Right lobe of liver (tissue), 6 donors: ENCODE measurements at regions of chr4 and their contacts with region 1.

Region 1: GRCh38 chr4:1249148-1249730 is 309 bp upstream of the CTBP1 start:
- DNase-seq: peak; percentile 90 to 93 (median 93)
- ATAC-seq: peak; percentile 70 to 78 (median 74)
- H3K4me3 ChIP-seq: peak overlapping the region; percentile 67 to 96 (median 69)
- H3K27ac ChIP-seq: peak overlapping the region; percentile 76 to 93 (median 87)
- H3K4me1 ChIP-seq: peaks cover 0 to 31% (median 15%) of the 10 kb centered on the region in 4 donors
- H3K27me3 ChIP-seq: no peaks in the 10 kb centered on the region
- CTCF ChIP-seq: no peak
- POLR2A ChIP-seq: peak; percentile 74

Region 2: DNA sequence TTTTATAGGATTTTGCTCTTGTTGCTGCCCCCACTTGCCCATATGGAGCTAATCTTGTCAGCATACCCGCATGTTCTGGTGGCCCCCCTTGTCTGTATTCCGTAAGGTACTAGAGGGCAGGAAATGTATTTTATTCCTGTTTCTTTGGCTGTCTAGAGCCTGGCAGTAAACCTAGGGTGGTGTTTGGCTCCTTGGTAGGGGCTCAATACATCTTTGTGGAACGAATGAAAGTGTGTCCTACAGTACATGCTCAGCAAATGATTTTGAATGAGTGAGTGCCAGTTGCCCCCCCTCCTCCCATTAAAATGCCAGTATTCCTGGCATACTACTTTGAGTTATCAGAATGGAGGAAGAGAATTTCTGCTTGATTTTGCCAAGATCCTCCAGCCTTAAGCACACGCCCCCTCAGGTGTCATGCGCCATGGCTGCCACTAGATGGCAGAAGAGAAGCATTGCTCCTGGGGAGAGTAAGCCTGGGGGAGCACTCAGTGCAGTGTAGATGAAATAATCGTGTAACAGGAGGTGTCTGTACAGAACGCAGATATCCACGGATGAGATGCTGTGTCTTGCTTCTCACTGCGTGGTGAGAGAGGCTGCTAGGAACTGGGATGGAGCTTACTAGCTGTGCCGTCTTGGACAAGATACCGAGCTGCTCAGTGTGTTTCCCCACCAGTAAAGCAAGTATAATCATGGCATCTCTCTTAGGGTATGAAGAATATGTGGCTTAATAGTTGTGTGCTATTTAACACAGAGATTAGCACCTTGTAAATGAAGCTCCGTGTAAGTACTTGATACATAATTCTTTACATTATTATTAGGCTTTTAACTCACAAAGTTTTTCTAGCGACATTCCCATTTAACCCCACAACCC is 118.7 kb before region 1 on chr4:
- intact Hi-C with region 1: loop called in 1 of 2 experiments (anchors 10 kb)
- DNase-seq: peak; percentile 62 to 74 (median 70)
- ATAC-seq: peak; percentile 98 to 100 (median 100)
- H3K4me3 ChIP-seq: no peak overlapping the region
- H3K27ac ChIP-seq: no peak overlapping the region
- H3K4me1 ChIP-seq: no peaks in the 10 kb centered on the region
- H3K27me3 ChIP-seq: no peaks in the 10 kb centered on the region
- CTCF ChIP-seq: peak; percentile 98 to 100 (median 99)
- POLR2A ChIP-seq: no peak

Region 3: GRCh38 chr4:1167247-1167949 is 81.8 kb before region 1 on chr4:
- intact Hi-C with region 1: loop called in 1 of 2 experiments (anchors 10 kb)
- DNase-seq: peak; percentile 80 to 85 (median 82)
- ATAC-seq: peak; percentile 82 to 91 (median 84)
- H3K4me3 ChIP-seq: peak overlapping the region; percentile 48 to 66 (median 58)
- H3K27ac ChIP-seq: peak overlapping the region in 2 of 3 donors; percentile 33 to 51
- H3K4me1 ChIP-seq: peaks cover 0 to 15% (median 0%) of the 10 kb centered on the region in 4 donors
- H3K27me3 ChIP-seq: no peaks in the 10 kb centered on the region
- CTCF ChIP-seq: peak; percentile 85 to 95 (median 90)
- POLR2A ChIP-seq: no peak

Region 4: GRCh38 chr4:1337376-1337860 is 88.2 kb after region 1 on chr4:
- intact Hi-C with region 1: loop called (anchors 5 kb)
- DNase-seq: peak in 2 of 3 donors; percentile 39 to 41
- ATAC-seq: peak in 1 of 4 donors; percentile 47
- H3K4me3 ChIP-seq: no peak overlapping the region
- H3K27ac ChIP-seq: no peak overlapping the region
- H3K4me1 ChIP-seq: no peaks in the 10 kb centered on the region
- H3K27me3 ChIP-seq: no peaks in the 10 kb centered on the region
- CTCF ChIP-seq: no peak
- POLR2A ChIP-seq: no peak

Region 5: DNA sequence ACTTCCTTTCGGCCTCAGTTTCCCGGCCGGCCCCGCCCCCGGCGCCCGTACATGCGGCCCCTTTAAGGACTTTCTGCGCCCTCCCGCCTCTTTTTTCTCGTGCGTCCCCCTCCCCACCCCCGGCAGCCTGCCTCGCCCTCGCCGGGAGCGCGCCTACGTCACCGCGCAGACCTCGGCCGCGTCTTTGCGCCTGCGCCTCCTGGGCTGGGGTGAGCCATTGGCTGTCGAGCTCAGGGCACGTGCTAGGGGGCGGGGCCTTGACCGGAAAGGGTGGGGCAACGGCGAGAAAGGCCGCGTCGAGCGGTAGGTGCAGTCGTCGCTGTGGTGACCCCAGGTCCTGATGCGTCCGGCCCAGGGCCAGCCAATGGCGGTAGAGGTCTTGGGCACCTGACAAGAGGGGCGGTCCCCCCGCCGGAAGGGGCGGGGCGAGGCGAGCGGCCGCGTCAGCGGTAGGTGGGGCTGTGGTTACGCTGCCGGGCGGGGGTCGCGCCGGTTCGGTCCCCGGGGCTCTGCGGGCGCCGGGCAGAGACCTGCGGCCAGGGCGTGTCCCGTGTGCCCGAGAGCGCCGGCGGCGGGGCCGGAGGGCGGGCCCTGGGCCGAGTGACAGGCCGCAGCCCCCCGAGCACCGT is 97.7 kb after region 1 on chr4 and contains the start of gene UVSSA:
- intact Hi-C with region 1: loop called (anchors 5 kb)
- DNase-seq: peak; percentile 100
- ATAC-seq: peak; percentile 90 to 96 (median 94)
- H3K4me3 ChIP-seq: peak within 1 kb of the TSS; percentile 77 to 99 (median 93)
- H3K27ac ChIP-seq: peak within 1 kb of the TSS; percentile 88 to 98 (median 95)
- H3K4me1 ChIP-seq: peaks cover 0 to 20% (median 4%) of the 10 kb centered on the region in 4 donors
- H3K27me3 ChIP-seq: no peaks in the 10 kb centered on the region
- CTCF ChIP-seq: peak in 1 of 4 donors; percentile 16
- POLR2A ChIP-seq: peak; percentile 96
- total RNA-seq, gene UVSSA: 9.1 to 14.5 (median 11.3) TPM

Region 6: GRCh38 chr4:1523907-1524636 is 274.8 kb after region 1 on chr4:
- intact Hi-C with region 1: no loop called
- DNase-seq: peak in 2 of 3 donors; percentile 9 to 23
- ATAC-seq: peak in 1 of 4 donors; percentile 17
- H3K4me3 ChIP-seq: no peak overlapping the region
- H3K27ac ChIP-seq: no peak overlapping the region
- H3K4me1 ChIP-seq: no peaks in the 10 kb centered on the region
- H3K27me3 ChIP-seq: peaks cover 0 to 10% of the 10 kb centered on the region in 2 donors
- CTCF ChIP-seq: no peak
- POLR2A ChIP-seq: no peak